Activated naive CD8-positive, alpha-beta T cell treated with anti-CD3 and anti-CD28 coated beads, Interleukin-2, amount 10 ng/mL, durations not matched to agents 7 days and 5 days (primary cell): ENCODE measurements at regions of chr5 and their contacts with region 1.

Region 1: GRCh38 chr5:80255732-80256479 is at the start of gene SERINC5:
- DNase-seq: peak; percentile 90
- ATAC-seq: peak; percentile 73
- H3K4me3 Mint-ChIP-seq: peak within 1 kb of the TSS; percentile 97
- H3K27ac Mint-ChIP-seq: peak within 1 kb of the TSS; percentile 98
- H3K4me1 Mint-ChIP-seq: peaks cover 31% of the 10 kb centered on the region
- H3K27me3 Mint-ChIP-seq: no peaks in the 10 kb centered on the region
- total RNA-seq, gene SERINC5: 70.2 to 78.3 TPM

Region 2: GRCh38 chr5:80125962-80126480 is 129.9 kb before region 1 on chr5:
- POLR2A ChIA-PET with region 1: interaction called, 12 read pairs
- DNase-seq: no peak
- ATAC-seq: peak; percentile 75
- H3K4me3 Mint-ChIP-seq: peak overlapping the region; percentile 29
- H3K27ac Mint-ChIP-seq: peak overlapping the region; percentile 52
- H3K4me1 Mint-ChIP-seq: peaks cover 21% of the 10 kb centered on the region
- H3K27me3 Mint-ChIP-seq: no peaks in the 10 kb centered on the region

Region 3: DNA sequence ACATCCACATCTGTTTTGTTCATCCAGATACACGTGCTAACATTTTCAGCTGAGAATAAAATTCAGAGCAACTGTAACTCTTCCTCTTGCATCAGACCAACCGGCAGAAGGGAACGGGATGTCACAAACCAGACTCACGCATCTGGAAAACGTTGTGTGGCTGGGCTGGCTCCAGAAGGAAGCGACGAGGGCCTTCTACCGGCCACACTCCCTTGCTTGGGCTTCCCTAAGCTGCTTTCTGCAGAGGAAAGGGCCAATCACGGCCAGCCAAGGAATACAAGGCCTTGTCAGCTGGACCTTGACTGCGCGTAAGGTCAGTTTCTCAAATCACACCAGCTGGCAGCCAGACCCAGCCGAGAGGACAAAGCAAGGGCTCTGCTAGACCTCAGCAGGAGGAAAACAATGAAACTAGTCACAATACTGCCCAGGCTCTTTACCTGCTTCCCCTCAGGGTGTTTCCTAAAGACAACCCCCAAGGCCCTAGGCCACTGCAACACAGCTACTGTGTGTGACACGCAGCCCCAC is 114.7 kb before region 1 on chr5:
- POLR2A ChIA-PET with region 1: interaction called, 23 read pairs
- DNase-seq: no peak
- ATAC-seq: no peak
- H3K4me3 Mint-ChIP-seq: peak overlapping the region; percentile 30
- H3K27ac Mint-ChIP-seq: peak overlapping the region; percentile 67
- H3K4me1 Mint-ChIP-seq: peaks cover 47% of the 10 kb centered on the region
- H3K27me3 Mint-ChIP-seq: no peaks in the 10 kb centered on the region

Region 4: DNA sequence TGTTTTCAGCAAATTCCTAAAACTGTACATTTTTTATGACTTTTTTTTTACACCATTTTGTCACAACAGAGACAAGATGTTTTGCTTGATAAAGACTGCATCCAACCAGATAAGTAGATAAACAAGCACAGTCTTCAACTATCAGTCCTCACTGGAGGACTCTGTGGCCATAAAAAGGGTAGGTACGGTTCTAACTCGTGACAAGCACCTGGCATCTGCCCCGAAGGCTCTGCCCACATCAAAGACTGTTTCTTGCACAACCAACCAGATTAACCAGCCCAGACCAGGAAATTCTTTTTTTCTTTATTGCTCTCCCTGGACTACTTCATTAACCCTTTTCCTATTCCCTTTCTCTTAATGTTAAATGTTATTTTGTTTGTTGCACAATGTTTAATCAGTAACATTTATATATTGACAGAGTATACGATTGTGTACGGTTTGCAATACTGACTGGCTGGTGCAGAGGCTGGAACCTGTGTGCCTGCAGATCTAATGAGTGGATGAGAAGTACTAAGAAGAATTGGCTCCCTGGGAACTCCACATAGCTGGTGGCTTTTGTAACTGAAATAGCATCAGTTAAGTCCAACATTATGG is 74.2 kb before region 1 on chr5:
- POLR2A ChIA-PET with region 1: interaction called, 50 read pairs
- DNase-seq: peak; percentile 46
- ATAC-seq: peak; percentile 63
- H3K4me3 Mint-ChIP-seq: peak overlapping the region; percentile 44
- H3K27ac Mint-ChIP-seq: peak overlapping the region; percentile 88
- H3K4me1 Mint-ChIP-seq: peaks cover 75% of the 10 kb centered on the region
- H3K27me3 Mint-ChIP-seq: no peaks in the 10 kb centered on the region

Region 5: GRCh38 chr5:80216753-80217596 is 38.9 kb before region 1 on chr5:
- POLR2A ChIA-PET with region 1: interaction called, 88 read pairs
- DNase-seq: peak; percentile 56
- ATAC-seq: peak; percentile 37
- H3K4me3 Mint-ChIP-seq: peak overlapping the region; percentile 88
- H3K27ac Mint-ChIP-seq: peak overlapping the region; percentile 89
- H3K4me1 Mint-ChIP-seq: peaks cover 73% of the 10 kb centered on the region
- H3K27me3 Mint-ChIP-seq: no peaks in the 10 kb centered on the region